Motor neuron (in vitro differentiated cells): ENCODE measurements at regions of chr19 and their contacts with region 1.

Region 1: DNA sequence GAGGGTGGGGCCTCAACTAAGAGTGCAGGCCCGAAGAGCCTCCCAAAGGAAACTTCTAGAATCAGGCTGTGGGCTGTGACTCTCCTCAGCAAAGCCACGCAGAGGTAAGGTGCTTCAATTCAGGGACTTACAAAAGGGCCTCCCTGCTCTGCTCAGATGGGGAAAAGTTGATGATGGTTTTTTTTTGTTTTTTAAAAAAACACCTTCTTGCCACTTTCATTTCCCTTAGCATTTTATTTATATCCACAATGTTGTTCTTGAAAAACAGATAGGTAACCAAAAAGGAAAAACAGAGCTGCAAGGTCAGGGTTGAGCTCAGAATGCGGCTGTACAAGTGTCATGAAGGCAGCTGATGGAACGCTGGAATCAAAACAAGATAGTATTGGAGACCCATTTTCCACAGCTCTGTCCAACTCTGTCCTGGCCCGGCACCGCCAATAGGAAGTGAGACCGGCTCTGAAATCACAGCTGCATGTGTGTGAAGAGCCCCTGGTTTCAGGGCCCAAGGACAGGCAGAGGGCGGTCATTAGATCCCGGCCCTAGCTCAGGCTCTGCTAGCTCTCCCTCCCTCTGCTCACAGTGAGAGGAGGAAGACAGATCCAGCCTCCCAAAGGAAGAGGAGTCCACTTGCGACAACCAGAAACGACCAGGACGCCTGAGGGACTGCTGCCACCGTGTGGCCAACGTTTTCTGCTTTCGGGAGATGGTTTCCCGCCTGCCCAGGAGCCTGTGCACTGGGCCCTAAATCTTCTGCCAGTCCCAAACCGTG is 58.3 kb downstream of the KLF2 start:
- ATAC-seq: peak; percentile 67 to 90 (median 84)
- H3K4me3 ChIP-seq: no peak overlapping the region
- H3K27ac ChIP-seq: no peak overlapping the region
- H3K4me1 ChIP-seq: no peaks in the 10 kb centered on the region

Region 2: GRCh38 chr19:16247353-16248182 is 135.4 kb before region 1 on chr19:
- in situ Hi-C with region 1: loop called in 7 of 9 experiments (anchors 10 to 25 kb)
- ATAC-seq: peak; percentile 97 to 100 (median 100)
- H3K4me3 ChIP-seq: no peak overlapping the region
- H3K27ac ChIP-seq: no peak overlapping the region
- H3K4me1 ChIP-seq: no peaks in the 10 kb centered on the region

Region 3: DNA sequence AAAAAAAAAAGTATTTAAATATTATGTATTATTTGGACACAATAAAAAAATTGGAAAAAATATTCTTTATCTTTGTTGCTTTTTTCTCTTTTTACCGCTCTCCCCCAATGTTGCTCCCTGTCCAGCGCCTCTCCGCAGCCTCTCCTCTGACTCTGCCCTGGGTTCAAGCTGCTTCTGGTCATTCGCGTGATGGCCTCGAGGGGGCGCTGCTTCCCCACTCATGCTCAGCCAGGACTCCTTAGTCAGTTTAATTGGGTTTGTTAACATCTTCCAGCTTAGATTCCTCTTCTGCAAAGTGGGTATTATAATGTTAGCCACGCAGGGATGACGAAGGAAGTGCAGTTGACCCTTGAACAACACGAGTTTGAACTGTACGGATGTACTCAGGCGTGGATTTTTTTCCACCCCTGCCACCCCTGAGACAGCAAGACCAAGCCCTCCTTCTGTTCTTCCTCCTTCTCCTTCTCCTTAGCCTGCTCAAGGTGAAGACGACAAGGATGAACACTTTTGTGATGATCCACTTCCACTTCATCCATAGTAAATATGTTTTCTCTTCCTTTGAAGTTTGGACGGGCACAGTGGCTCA is 331.8 kb after region 1 on chr19:
- in situ Hi-C with region 1: no loop called
- ATAC-seq: peak in 7 of 8 experiments; percentile 44 to 82 (median 65)
- H3K4me3 ChIP-seq: no peak overlapping the region
- H3K27ac ChIP-seq: no peak overlapping the region
- H3K4me1 ChIP-seq: no peaks in the 10 kb centered on the region